ENCODE measurements at regions of chr6 and their contacts with region 1.

Region 1: DNA sequence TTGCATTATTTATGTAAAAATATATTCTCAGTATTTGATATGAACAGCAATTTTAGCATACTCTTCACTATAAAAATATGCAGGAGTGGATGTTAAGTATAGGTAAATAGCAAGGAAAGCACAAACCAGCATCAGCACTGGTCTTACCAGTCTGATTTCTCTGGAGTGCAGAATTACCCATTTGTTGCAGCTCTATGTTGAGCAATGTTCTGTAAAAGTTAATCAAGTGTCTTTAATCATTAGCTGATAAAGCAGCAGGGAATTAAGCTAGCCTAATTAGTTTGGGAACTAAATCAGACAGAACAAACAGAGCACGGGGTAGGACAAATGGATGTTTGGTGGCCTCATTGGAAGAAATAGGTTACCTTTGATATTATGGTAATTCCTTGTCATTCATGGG is 74.3 kb downstream of the ANKRD6 start:
- DNase-seq: no peak
- H3K4me3 ChIP-seq: no peak overlapping the region
- H3K4me3 Mint-ChIP-seq: no peak overlapping the region
- H3K27ac Mint-ChIP-seq: no peak overlapping the region
- H3K4me1 ChIP-seq: peaks cover 43% of the 10 kb centered on the region
- H3K4me1 Mint-ChIP-seq: peaks cover 33% of the 10 kb centered on the region
- H3K27me3 ChIP-seq: no peaks in the 10 kb centered on the region
- H3K27me3 Mint-ChIP-seq: no peaks in the 10 kb centered on the region
- CTCF ChIP-seq: no peak

Region 2: GRCh38 chr6:89467437-89467836 is 39.8 kb before region 1 on chr6:
- CTCF ChIA-PET with region 1: interaction called, 11 read pairs
- POLR2A ChIA-PET with region 1: no interaction called
- intact Hi-C with region 1: loop called (anchors 5 kb)
- DNase-seq: no peak
- H3K4me3 ChIP-seq: no peak overlapping the region
- H3K4me3 Mint-ChIP-seq: no peak overlapping the region
- H3K27ac Mint-ChIP-seq: no peak overlapping the region
- H3K4me1 ChIP-seq: no peaks in the 10 kb centered on the region
- H3K4me1 Mint-ChIP-seq: peaks cover 18% of the 10 kb centered on the region
- H3K27me3 ChIP-seq: no peaks in the 10 kb centered on the region; the same call in 1 of the 2 replicates
- H3K27me3 Mint-ChIP-seq: no peaks in the 10 kb centered on the region
- CTCF ChIP-seq: no peak

Region 3: GRCh38 chr6:89475634-89476033 is 31.6 kb before region 1 on chr6:
- CTCF ChIA-PET with region 1: no interaction called
- POLR2A ChIA-PET with region 1: no interaction called
- intact Hi-C with region 1: loop called (anchors 2 kb)
- DNase-seq: no peak
- H3K4me3 ChIP-seq: no peak overlapping the region
- H3K4me3 Mint-ChIP-seq: no peak overlapping the region
- H3K27ac Mint-ChIP-seq: no peak overlapping the region
- H3K4me1 ChIP-seq: no peaks in the 10 kb centered on the region
- H3K4me1 Mint-ChIP-seq: peaks cover 7% of the 10 kb centered on the region
- H3K27me3 ChIP-seq: no peaks in the 10 kb centered on the region
- H3K27me3 Mint-ChIP-seq: no peaks in the 10 kb centered on the region
- CTCF ChIP-seq: no peak

Region 4: GRCh38 chr6:89494131-89494796 is 13.0 kb before region 1 on chr6:
- CTCF ChIA-PET with region 1: no interaction called
- POLR2A ChIA-PET with region 1: no interaction called
- intact Hi-C with region 1: no loop called
- DNase-seq: no peak
- H3K4me3 ChIP-seq: no peak overlapping the region
- H3K4me3 Mint-ChIP-seq: no peak overlapping the region
- H3K27ac Mint-ChIP-seq: peak overlapping the region; percentile 72
- H3K4me1 ChIP-seq: peaks cover 9% of the 10 kb centered on the region; the same call in 1 of the 2 replicates
- H3K4me1 Mint-ChIP-seq: peaks cover 20% of the 10 kb centered on the region
- H3K27me3 ChIP-seq: no peaks in the 10 kb centered on the region
- H3K27me3 Mint-ChIP-seq: no peaks in the 10 kb centered on the region
- CTCF ChIP-seq: peak in 1 of 2 experiments; percentile 37

Region 5: DNA sequence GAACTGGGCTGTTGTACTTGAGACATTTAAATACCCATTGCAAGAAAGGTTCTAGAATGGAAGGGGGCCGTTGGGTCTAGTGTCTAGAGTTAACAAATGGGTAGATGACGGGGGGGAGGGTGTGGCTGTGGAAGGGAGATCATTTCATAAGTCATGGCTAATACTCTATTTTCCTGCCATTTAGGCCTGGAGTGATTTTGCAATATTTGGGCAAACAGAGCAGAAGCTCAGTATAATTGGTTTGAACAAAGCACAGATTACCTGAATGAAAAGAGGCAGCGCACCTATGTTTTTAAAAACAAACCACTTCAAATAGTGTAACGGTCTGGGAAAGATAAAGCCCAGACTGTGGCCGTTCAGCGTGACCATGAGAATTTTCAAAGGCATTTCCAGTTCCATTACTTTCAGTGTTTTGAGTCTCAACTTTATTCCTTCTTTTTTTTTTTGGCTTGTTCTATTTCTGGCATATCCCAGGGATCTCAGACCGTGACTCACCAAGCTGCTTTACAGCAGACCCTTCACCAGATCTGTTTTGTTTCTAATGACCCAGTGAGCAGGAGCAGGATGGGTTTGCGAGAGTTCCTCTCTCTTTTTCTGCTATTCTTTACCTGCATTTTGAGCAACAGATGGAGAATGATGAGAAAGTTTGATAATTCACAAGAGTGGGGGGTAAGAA is 57.6 kb after region 1 on chr6:
- CTCF ChIA-PET with region 1: no interaction called
- POLR2A ChIA-PET with region 1: no interaction called
- intact Hi-C with region 1: loop called (anchors 2 kb)
- DNase-seq: peak in 1 of 2 experiments; percentile 38
- H3K4me3 ChIP-seq: no peak overlapping the region
- H3K4me3 Mint-ChIP-seq: no peak overlapping the region
- H3K27ac Mint-ChIP-seq: no peak overlapping the region
- H3K4me1 ChIP-seq: peaks cover 18% of the 10 kb centered on the region
- H3K4me1 Mint-ChIP-seq: peaks cover 21% of the 10 kb centered on the region
- H3K27me3 ChIP-seq: no peaks in the 10 kb centered on the region
- H3K27me3 Mint-ChIP-seq: no peaks in the 10 kb centered on the region
- CTCF ChIP-seq: no peak